Heart right ventricle (tissue), 16 donors: ENCODE measurements at regions of chr15 and their contacts with region 1.

Region 1: DNA sequence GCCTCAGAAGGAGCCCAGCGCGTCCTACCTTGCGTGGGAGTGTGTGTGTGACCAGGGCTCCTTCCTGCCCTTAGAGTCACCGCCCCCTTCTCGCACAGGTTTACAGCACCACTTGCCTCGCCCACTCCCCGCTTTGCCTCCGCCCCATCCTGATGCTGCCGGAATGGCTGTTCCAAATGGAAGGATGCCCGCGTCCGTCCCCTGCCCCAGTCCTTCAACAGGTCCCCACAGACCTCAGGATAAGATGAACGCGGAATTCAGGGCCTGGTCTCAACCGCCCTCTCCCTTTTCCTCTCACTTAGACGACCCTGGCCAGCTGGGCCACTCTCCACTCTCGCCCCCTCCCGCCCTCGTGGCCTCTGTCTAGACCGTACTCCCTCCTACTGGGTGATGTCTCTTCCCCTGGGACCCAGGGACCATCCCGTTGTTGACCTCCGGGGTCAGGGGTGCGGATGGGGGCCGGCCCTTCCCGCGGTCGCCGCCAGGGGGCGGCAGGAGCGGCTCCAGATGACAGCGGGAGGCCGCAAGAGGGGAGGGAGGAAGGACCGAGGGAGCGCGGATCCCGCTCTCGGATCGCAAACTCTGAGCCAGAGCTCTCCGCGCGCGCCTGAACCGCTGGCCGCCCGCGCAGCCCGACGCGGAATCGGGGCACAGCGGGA is at the start of gene THSD4:
- DNase-seq: peak; percentile 66 to 79
- ATAC-seq: peak; percentile 58 to 78 (median 70)
- H3K4me3 ChIP-seq: peak within 1 kb of the TSS; percentile 58 to 79 (median 66)
- H3K27ac ChIP-seq: peak within 1 kb of the TSS; percentile 73 to 96 (median 88)
- H3K4me1 ChIP-seq: peaks cover 0 to 37% (median 9%) of the 10 kb centered on the region in 9 donors
- H3K27me3 ChIP-seq: peaks cover 0 to 38% (median 0%) of the 10 kb centered on the region in 7 donors
- CTCF ChIP-seq: peak; percentile 86 to 98 (median 96)
- total RNA-seq, gene THSD4: 72.3 to 212 (median 170) TPM

Region 2: GRCh38 chr15:70932397-70932796 is 182.6 kb before region 1 on chr15:
- intact Hi-C with region 1: loop called in 1 of 10 experiments (anchors 5 kb)
- DNase-seq: no peak
- ATAC-seq: no peak
- H3K4me3 ChIP-seq: no peak overlapping the region
- H3K27ac ChIP-seq: no peak overlapping the region
- H3K4me1 ChIP-seq: peaks cover 0 to 9% (median 0%) of the 10 kb centered on the region in 9 donors
- H3K27me3 ChIP-seq: no peaks in the 10 kb centered on the region
- CTCF ChIP-seq: no peak

Region 3: DNA sequence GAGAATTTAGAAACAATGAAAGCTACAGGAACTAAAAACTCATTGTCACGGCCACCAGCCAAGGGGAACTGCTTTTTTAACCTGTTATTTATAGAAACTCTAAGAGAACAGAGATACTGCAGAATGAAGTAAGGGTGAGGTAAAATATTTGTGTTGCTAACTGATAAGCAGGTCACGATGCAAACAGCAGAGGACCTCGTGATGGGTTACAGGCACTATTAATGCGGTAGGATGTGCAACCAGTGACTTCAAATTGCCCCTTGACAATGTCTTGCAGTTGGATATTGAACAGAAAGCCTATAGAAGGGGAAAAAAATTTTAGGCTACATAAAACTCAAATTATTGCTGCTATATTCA is 53.4 kb after region 1 on chr15:
- intact Hi-C with region 1: loop called in 2 of 10 experiments (anchors 5 kb)
- DNase-seq: peak in 1 of 2 donors; percentile 49
- ATAC-seq: peak; percentile 49 to 99 (median 94)
- H3K4me3 ChIP-seq: no peak overlapping the region
- H3K27ac ChIP-seq: peak overlapping the region; percentile 45 to 81 (median 72)
- H3K4me1 ChIP-seq: peaks cover 0 to 34% (median 9%) of the 10 kb centered on the region in 9 donors
- H3K27me3 ChIP-seq: no peaks in the 10 kb centered on the region
- CTCF ChIP-seq: no peak

Region 4: GRCh38 chr15:71195240-71195639 is 80.2 kb after region 1 on chr15:
- intact Hi-C with region 1: no loop called
- DNase-seq: no peak
- ATAC-seq: no peak
- H3K4me3 ChIP-seq: no peak overlapping the region
- H3K27ac ChIP-seq: no peak overlapping the region
- H3K4me1 ChIP-seq: peaks cover 0 to 28% (median 11%) of the 10 kb centered on the region in 9 donors
- H3K27me3 ChIP-seq: no peaks in the 10 kb centered on the region
- CTCF ChIP-seq: peak in 1 of 9 donors; percentile 6

Region 5: GRCh38 chr15:71329497-71330260 is 214.7 kb after region 1 on chr15:
- intact Hi-C with region 1: loop called in 1 of 10 experiments (anchors 10 kb)
- DNase-seq: peak in 1 of 2 donors; percentile 38
- ATAC-seq: peak in 6 of 8 donors; percentile 41 to 91 (median 70)
- H3K4me3 ChIP-seq: no peak overlapping the region
- H3K27ac ChIP-seq: peak overlapping the region; percentile 22 to 90 (median 78)
- H3K4me1 ChIP-seq: peaks cover 12 to 70% (median 38%) of the 10 kb centered on the region in 9 donors
- H3K27me3 ChIP-seq: no peaks in the 10 kb centered on the region
- CTCF ChIP-seq: no peak

Region 6: GRCh38 chr15:71386448-71387236 is 271.6 kb after region 1 on chr15:
- intact Hi-C with region 1: no loop called
- DNase-seq: no peak
- ATAC-seq: peak in 3 of 8 donors; percentile 55 to 60 (median 59)
- H3K4me3 ChIP-seq: no peak overlapping the region
- H3K27ac ChIP-seq: no peak overlapping the region
- H3K4me1 ChIP-seq: peaks cover 0 to 52% (median 21%) of the 10 kb centered on the region in 9 donors
- H3K27me3 ChIP-seq: no peaks in the 10 kb centered on the region
- CTCF ChIP-seq: peak in 8 of 9 donors; percentile 28 to 64 (median 52)

Region 7: GRCh38 chr15:71437404-71438318 is 322.6 kb after region 1 on chr15:
- intact Hi-C with region 1: loop called (anchors 2 to 5 kb)
- DNase-seq: no peak
- ATAC-seq: peak in 2 of 8 donors; percentile 48 to 59
- H3K4me3 ChIP-seq: no peak overlapping the region
- H3K27ac ChIP-seq: peak overlapping the region in 4 of 10 donors; percentile 15 to 32 (median 26)
- H3K4me1 ChIP-seq: peaks cover 0 to 20% (median 6%) of the 10 kb centered on the region in 9 donors
- H3K27me3 ChIP-seq: no peaks in the 10 kb centered on the region
- CTCF ChIP-seq: no peak